ENCODE measurements at regions of chr9 and their contacts with region 1.

Region 1: DNA sequence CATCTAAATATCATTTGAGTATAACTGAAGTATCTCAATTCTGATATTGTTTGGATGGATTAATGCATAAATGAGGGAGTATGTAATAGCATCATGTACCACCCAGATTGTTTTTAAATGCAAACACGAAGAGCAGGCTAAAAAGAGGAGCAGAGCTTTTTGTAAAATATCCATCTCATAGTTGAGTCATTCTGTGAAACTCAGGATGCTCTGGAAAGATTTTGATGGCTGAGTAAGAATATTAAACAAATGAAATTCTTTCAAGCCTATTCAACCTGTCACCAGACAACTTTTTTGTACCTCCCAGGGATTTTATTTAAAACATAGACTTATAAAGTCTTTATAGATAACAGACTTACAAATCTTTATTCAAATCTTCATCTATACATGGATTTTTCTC is 625.9 kb downstream of the TLE4 start:
- DNase-seq: peak; percentile 33
- H3K4me3 ChIP-seq: no peak overlapping the region
- H3K27ac ChIP-seq: no peak overlapping the region
- H3K27me3 ChIP-seq: no peaks in the 10 kb centered on the region
- CTCF ChIP-seq: no peak

Region 2: DNA sequence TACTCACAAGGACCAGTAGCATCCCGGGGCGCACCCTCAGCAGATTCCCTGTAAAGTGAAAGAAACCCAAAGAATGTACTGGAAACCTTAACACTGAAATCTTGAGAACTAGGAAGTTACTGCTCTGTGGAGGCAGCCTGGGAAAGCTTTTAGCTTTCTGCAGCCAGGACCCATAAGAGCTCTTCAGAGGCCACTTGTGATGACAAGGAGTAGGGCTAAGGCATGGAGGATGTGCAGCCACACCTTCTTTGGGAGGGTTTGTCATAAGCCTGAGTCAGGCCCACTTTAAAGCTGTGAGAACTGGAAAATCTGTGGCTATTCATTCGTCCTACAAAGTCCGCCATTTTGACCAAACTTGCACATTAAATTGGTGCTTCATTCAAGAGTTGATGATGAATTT is 917.0 kb before region 1 on chr9:
- CTCF ChIA-PET with region 1: no interaction called
- POLR2A ChIA-PET with region 1: no interaction called
- DNase-seq: no peak
- H3K4me3 ChIP-seq: no peak overlapping the region
- H3K27ac ChIP-seq: no peak overlapping the region
- H3K27me3 ChIP-seq: no peaks in the 10 kb centered on the region
- CTCF ChIP-seq: no peak

Region 3: DNA sequence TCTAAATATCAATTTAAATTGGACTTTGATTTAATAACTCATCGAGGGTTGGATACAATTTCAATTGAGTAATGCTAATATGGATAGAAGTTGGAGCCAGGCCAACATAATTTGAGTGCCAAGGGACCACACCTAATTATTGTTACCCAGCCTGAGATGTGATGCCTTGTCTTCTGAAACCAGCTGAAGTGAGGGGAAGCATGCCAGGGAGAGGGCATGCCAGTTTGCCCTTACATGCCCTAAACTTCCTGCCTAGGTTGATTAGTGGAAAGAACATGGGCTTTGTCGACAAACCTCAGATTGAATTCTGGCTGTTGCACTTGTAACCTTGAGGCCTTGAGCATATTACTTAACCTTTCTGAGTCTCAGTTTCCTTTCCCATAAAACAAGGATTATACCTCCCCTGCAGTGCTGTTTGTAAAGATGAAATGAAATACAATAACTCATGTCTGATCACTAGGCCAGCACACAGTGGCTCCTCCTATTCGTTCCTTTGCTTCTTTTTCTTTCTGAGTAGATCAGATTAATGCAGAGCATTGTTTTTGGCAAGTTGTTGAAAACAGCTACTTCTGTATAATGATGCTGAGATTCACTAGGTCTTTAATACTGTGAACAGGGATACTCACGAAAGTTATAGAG is 213.1 kb before region 1 on chr9:
- CTCF ChIA-PET with region 1: no interaction called
- POLR2A ChIA-PET with region 1: no interaction called
- DNase-seq: no peak
- H3K4me3 ChIP-seq: no peak overlapping the region
- H3K27ac ChIP-seq: no peak overlapping the region
- H3K27me3 ChIP-seq: peaks cover 5% of the 10 kb centered on the region
- CTCF ChIP-seq: no peak

Region 4: DNA sequence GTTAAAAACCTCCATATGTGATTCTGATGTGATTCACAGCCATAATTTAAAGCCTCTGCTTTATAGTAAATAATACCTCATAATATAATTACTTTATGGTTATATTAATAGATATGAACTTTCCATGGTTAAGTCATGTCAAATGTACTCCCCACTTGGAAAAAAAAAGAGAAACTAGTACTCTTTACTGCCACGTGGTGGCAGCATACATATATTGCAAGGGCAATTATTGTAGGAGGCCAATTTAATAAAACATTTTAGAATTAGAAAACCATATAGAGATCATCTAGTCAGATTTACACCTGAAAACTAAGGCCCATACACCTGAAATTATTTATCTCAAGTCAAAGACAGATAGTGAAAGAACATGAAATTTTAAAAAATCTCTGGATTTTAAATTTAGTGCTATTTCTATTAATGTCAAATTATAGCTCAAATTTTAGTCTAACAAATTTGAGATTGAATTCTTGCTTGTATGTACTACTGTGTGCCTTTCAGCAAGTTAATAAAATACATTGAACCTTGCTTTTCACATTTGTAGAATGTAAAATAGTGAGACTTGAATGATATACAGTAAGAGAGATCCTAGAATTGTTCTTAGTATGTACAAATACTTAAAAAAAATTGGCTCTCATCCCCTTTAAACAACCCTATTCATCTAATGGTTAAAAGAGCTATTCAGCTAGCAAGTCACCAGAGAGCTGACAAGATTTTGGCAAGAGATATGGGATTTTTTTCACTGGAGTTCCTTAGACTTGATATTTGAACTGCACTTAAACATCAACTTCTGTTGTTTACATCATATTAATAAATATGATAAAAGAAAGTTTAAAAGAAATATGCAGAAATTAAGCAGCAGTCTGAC is 22.1 kb before region 1 on chr9:
- CTCF ChIA-PET with region 1: interaction called, 10 read pairs
- POLR2A ChIA-PET with region 1: no interaction called
- DNase-seq: no peak
- H3K4me3 ChIP-seq: no peak overlapping the region
- H3K27ac ChIP-seq: no peak overlapping the region
- H3K27me3 ChIP-seq: no peaks in the 10 kb centered on the region
- CTCF ChIP-seq: peak; percentile 80

Region 5: DNA sequence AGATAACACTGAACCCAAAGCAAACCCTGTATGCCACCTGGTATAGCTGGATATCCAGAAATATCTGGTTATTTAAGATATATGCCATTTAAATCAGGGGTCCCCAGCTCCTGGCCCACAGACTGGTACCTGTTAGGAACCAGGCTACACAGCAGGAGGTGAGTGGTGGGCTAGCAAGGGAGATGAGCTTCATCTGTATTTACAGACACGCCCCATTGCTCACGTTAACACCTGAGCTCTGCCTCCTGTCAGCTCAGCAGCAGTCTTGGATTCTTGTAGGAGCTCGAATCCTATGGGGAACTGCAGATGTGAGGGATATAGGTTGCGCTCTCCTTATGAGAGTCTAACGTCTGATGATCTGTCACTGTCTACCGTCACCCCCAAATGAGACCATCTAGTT is 20.7 kb after region 1 on chr9:
- CTCF ChIA-PET with region 1: no interaction called
- POLR2A ChIA-PET with region 1: no interaction called
- DNase-seq: no peak
- H3K4me3 ChIP-seq: no peak overlapping the region
- H3K27ac ChIP-seq: no peak overlapping the region
- H3K27me3 ChIP-seq: no peaks in the 10 kb centered on the region
- CTCF ChIP-seq: no peak

Measured in AG04450 (cell line).